Naive thymus-derived CD4-positive, alpha-beta T cell (primary cell): ENCODE measurements at regions of chr2 and their contacts with region 1.

Region 1: DNA sequence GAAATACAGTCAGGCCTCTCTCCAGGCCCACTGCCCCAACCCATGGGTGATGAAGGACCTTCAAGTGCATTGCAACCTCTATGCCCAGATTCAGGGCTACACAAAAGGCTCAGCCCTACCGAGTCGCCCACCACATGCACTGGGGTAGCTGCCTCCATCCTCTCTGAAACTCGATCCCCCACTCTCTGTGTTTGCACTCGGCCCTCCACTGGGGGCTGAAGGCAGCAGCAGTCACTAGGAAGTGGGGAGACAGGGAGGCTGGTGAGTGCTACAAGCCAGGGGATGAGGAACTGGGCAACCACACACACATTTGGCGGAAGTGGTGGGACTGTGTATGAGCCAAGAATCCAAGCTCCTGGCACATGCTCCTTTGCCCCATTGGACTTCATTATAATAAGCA is 94.6 kb downstream of the CERS6 start:
- DNase-seq: no peak
- ATAC-seq: peak; percentile 65
- H3K4me3 ChIP-seq: no peak overlapping the region
- H3K4me3 Mint-ChIP-seq: peak overlapping the region in 3 of 10 donors; percentile 60 to 69 (median 67)
- H3K27ac ChIP-seq: no peak overlapping the region
- H3K27ac Mint-ChIP-seq: peak overlapping the region in 1 of 9 donors; percentile 41
- H3K4me1 ChIP-seq: peaks cover 0 to 20% of the 10 kb centered on the region in 2 donors
- H3K4me1 Mint-ChIP-seq: peaks cover 3 to 76% (median 62%) of the 10 kb centered on the region in 7 donors
- H3K27me3 ChIP-seq: no peaks in the 10 kb centered on the region
- H3K27me3 Mint-ChIP-seq: no peaks in the 10 kb centered on the region

Region 2: GRCh38 chr2:168392024-168392423 is 158.6 kb before region 1 on chr2:
- CTCF ChIA-PET with region 1: no interaction called
- POLR2A ChIA-PET with region 1: no interaction called
- intact Hi-C with region 1: no loop called
- DNase-seq: no peak
- ATAC-seq: no peak
- H3K4me3 ChIP-seq: no peak overlapping the region
- H3K4me3 Mint-ChIP-seq: no peak overlapping the region
- H3K27ac ChIP-seq: no peak overlapping the region
- H3K27ac Mint-ChIP-seq: no peak overlapping the region
- H3K4me1 ChIP-seq: no peaks in the 10 kb centered on the region
- H3K4me1 Mint-ChIP-seq: no peaks in the 10 kb centered on the region
- H3K27me3 ChIP-seq: no peaks in the 10 kb centered on the region
- H3K27me3 Mint-ChIP-seq: peaks cover 0 to 36% (median 0%) of the 10 kb centered on the region in 5 donors

Region 3: DNA sequence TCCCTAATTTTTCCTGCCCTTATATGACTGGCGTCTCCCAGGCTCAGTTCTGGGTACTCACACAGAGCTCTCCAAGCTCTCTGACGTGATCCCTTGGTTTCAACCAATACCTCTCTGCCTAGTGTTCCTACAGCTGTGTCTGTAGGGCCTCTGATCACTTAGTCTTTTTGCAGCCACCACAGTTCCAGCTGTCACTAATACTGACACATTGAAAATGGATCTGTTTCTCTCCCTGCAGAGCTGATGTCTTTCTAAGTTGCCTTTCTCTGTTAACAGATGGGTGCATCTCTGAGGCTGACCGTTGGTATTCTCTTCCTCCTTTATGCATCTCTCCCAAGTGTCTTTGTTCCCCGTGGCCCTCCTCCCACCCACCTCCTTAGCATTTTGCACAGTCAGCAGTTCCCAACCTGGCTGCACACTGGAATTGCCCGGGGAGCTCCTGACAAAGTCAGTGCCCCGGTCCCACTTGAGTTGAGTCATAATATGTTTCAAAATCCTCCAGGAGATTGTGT is 32.1 kb before region 1 on chr2:
- CTCF ChIA-PET with region 1: no interaction called
- POLR2A ChIA-PET with region 1: no interaction called
- intact Hi-C with region 1: no loop called
- DNase-seq: no peak
- ATAC-seq: no peak
- H3K4me3 ChIP-seq: no peak overlapping the region
- H3K4me3 Mint-ChIP-seq: peak overlapping the region in 1 of 10 donors; percentile 24
- H3K27ac ChIP-seq: no peak overlapping the region
- H3K27ac Mint-ChIP-seq: peak overlapping the region in 4 of 9 donors; percentile 8 to 70 (median 42)
- H3K4me1 ChIP-seq: peaks cover 0 to 4% of the 10 kb centered on the region in 2 donors
- H3K4me1 Mint-ChIP-seq: peaks cover 25 to 78% (median 68%) of the 10 kb centered on the region in 7 donors
- H3K27me3 ChIP-seq: no peaks in the 10 kb centered on the region
- H3K27me3 Mint-ChIP-seq: no peaks in the 10 kb centered on the region

Region 4: GRCh38 chr2:168565112-168565511 is 14.4 kb after region 1 on chr2:
- CTCF ChIA-PET with region 1: no interaction called
- POLR2A ChIA-PET with region 1: no interaction called
- intact Hi-C with region 1: loop called in 1 of 2 experiments (anchors 2 kb)
- DNase-seq: no peak
- ATAC-seq: no peak
- H3K4me3 ChIP-seq: no peak overlapping the region
- H3K4me3 Mint-ChIP-seq: peak overlapping the region in 1 of 10 donors; percentile 15
- H3K27ac ChIP-seq: no peak overlapping the region
- H3K27ac Mint-ChIP-seq: peak overlapping the region in 2 of 9 donors; percentile 7 to 33
- H3K4me1 ChIP-seq: peaks cover 0 to 10% of the 10 kb centered on the region in 2 donors
- H3K4me1 Mint-ChIP-seq: peaks cover 13 to 78% (median 57%) of the 10 kb centered on the region in 7 donors
- H3K27me3 ChIP-seq: no peaks in the 10 kb centered on the region
- H3K27me3 Mint-ChIP-seq: no peaks in the 10 kb centered on the region